Prostate gland (tissue), 2 donors: ENCODE measurements at regions of chr1 and their contacts with region 1.

Region 1: DNA sequence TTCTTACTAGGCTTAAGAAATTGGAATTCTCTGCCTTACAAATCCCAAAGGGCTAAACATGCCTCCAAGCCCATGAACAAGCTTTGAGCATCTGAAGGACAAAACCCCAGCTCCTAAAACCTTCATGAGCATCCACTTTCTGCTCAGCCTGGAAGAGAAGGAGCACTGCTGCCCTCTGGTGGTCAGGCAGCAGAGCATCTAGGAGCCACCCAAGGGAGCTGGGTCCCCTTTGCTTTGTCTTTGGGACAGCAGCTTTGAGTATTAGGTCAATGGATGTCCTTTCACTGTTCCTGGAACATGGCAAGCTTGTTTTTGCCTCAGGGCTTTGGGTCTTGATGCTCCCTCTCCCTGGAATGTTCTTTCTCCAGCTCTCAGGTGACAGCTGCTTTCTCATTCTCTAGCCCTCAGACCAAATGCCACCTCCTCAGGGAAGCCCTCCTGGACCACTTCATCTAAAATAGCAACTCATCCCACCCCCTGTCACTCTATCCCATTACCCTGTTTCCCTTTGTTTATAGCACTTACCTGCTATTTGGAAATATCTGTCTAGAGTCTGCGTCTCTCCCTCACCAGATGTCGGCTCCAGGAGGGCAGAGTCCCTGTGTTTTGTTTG is 25.7 kb downstream of the RAB7B start:
- DNase-seq: peak; percentile 58
- H3K4me3 ChIP-seq: no peak overlapping the region
- H3K27ac ChIP-seq: no peak overlapping the region
- H3K4me1 ChIP-seq: no peaks in the 10 kb centered on the region
- H3K27me3 ChIP-seq: no peaks in the 10 kb centered on the region
- CTCF ChIP-seq: peak; percentile 92 to 96 (median 94)
- POLR2A ChIP-seq: no peak

Region 2: DNA sequence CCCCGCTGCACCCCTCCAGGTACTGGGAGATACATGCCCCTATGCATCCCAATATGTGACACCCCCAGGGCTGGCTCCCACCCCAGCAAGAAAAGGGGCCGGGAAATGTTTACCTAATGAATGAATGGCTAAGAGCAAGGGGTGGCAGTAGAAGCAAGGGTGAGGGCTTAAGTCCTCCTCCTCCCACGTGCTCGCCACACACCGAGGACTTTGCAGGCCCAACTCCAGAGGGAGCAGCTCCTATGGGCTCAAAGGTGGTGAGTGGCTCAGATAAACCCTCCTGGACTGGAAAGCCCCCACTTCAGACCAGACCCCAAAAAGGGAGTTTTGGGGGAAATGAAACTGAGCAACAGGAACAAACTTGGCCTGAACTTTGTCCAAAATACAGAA is 308.6 kb before region 1 on chr1:
- intact Hi-C with region 1: loop called (anchors 5 kb)
- DNase-seq: no peak
- H3K4me3 ChIP-seq: peak overlapping the region in 1 of 2 donors; percentile 84
- H3K27ac ChIP-seq: peak overlapping the region; percentile 37 to 89
- H3K4me1 ChIP-seq: peaks cover 5% of the 10 kb centered on the region
- H3K27me3 ChIP-seq: no peaks in the 10 kb centered on the region
- CTCF ChIP-seq: no peak
- POLR2A ChIP-seq: no peak

Region 3: GRCh38 chr1:205791568-205792180 is 185.8 kb before region 1 on chr1:
- intact Hi-C with region 1: loop called (anchors 2 kb)
- DNase-seq: peak; percentile 61
- H3K4me3 ChIP-seq: no peak overlapping the region
- H3K27ac ChIP-seq: no peak overlapping the region
- H3K4me1 ChIP-seq: no peaks in the 10 kb centered on the region
- H3K27me3 ChIP-seq: no peaks in the 10 kb centered on the region
- CTCF ChIP-seq: peak; percentile 31 to 81 (median 66)
- POLR2A ChIP-seq: no peak

Region 4: GRCh38 chr1:205883792-205884191 is 93.7 kb before region 1 on chr1:
- intact Hi-C with region 1: no loop called
- DNase-seq: no peak
- H3K4me3 ChIP-seq: no peak overlapping the region
- H3K27ac ChIP-seq: no peak overlapping the region
- H3K4me1 ChIP-seq: no peaks in the 10 kb centered on the region
- H3K27me3 ChIP-seq: no peaks in the 10 kb centered on the region
- CTCF ChIP-seq: no peak
- POLR2A ChIP-seq: no peak

Region 5: DNA sequence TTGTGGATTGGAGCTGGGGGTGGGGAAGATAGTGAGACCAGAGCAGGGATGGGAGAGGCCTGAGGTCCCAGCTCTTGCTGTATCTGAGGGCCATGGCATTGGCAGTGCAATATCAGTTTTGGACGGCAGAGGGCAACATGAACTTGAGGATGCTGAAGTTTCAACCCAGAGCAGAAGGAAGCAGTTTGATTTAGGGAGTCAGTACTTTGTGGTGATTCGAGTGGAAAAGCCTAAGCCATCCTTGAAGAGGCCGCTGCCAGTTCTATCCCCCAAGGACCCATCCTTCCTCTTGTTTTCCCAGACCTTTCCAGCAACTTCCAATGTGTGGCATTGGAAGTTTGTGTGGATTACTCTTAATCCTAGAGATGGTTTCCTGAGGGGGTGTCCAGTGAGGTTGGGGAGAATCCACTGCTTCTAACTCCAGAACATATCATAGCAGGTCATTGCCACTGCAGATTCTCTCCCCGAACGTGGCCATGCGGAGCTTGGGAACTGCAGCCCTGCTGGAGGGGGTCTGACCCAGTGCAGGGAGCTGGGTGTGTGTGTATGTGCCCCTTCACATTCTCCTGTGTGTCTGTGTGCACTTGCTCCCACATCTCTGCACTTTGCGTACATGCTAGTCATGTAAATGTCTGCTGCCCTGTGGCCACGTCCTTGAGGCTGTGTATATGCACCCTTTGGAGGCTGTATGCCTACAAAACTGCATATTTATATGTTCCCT is 58.3 kb before region 1 on chr1:
- intact Hi-C with region 1: loop called (anchors 1 kb)
- DNase-seq: peak; percentile 84
- H3K4me3 ChIP-seq: no peak overlapping the region
- H3K27ac ChIP-seq: no peak overlapping the region
- H3K4me1 ChIP-seq: no peaks in the 10 kb centered on the region
- H3K27me3 ChIP-seq: no peaks in the 10 kb centered on the region
- CTCF ChIP-seq: peak; percentile 68 to 95 (median 88)
- POLR2A ChIP-seq: no peak